ENCODE measurements at regions of chr19 and their contacts with region 1.

Region 1: DNA sequence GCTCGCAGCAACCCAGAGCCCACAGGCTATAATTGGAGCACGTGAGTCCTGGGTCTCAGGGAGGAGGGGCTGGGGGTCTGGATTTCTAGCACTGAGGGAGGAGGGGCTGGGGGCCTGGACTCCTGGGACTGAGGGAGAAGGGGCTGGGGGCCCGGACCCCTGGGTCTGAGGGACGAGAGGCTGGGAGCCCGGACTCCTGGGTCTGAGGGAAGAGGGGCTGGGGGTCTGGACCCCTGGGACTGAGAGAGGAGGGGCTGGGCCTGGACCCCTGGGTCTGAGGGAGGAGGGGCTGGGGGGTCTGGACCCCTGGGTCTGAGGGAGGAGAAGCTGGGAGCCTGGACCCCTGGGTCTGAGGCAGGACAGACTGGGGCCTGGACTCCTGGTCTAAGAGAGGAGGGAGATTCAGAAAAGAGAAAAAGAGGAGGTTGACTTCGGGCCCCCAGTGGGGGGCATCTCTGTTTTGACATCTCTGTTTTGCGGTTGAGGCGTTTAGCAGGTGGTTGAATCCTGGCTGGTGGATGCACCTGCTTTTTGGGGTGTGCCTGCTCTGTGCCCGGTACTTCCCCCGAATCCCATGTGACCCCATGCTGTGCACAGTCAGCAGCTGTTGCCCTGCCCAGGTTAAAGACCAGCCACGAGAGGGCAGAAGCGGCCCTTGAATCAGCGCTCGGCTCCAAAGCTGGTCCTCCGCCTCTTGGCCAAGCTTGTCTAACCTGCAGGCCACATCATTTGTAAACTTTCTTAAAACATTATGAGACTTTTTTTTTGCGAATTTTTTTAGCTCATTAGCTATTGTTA is 10.5 kb downstream of the PVR start:
- DNase-seq: peak; percentile 48
- H3K4me3 ChIP-seq: no peak overlapping the region
- H3K27ac ChIP-seq: no peak overlapping the region
- H3K4me1 ChIP-seq: no peaks in the 10 kb centered on the region
- H3K27me3 ChIP-seq: no peaks in the 10 kb centered on the region
- CTCF ChIP-seq: peak; percentile 62 to 76
- POLR2A ChIP-seq: no peak

Region 2: DNA sequence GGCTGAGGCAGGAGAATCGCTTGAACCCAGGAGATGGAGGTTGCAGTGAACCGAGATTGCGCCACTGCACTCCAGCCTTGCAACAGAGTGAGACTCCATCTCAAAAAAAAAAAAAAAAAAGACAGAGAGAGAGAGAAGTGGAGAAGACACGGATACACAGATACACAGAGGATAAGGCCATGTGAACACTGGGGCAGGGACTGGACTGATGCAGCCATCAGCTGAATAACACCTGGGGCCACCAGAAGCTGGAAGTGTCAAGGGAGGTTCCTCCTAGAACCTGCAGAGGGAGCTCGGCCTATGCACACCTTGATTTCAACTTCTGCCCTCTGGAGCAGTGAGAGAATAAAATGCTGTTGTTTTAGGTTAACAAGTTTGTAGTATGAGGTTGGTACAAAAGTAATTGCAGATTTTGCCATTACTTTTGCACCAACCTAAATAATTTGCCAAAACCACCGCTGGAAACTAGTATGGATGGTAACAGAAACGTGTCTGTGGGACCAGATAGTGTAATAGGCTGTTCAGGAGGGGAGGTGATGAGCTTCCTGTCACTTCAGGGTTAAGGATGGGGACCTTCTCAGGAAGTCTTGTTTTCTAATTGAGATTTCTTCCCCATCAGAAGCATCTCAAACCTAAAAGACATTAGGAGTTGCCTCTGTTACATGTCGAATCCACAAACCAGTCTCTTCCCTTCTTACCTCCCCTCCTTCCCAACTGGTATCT is 77.2 kb before region 1 on chr19:
- CTCF ChIA-PET with region 1: interaction called, 272 read pairs
- POLR2A ChIA-PET with region 1: no interaction called
- dilution Hi-C with region 1: no loop called
- intact Hi-C with region 1: loop called (anchors 1 kb)
- DNase-seq: peak; percentile 43
- H3K4me3 ChIP-seq: no peak overlapping the region
- H3K27ac ChIP-seq: no peak overlapping the region
- H3K4me1 ChIP-seq: no peaks in the 10 kb centered on the region
- H3K27me3 ChIP-seq: no peaks in the 10 kb centered on the region
- CTCF ChIP-seq: peak; percentile 38 to 68
- POLR2A ChIP-seq: no peak

Region 3: GRCh38 chr19:44582581-44583265 is 71.5 kb before region 1 on chr19:
- CTCF ChIA-PET with region 1: interaction called, 97 read pairs
- POLR2A ChIA-PET with region 1: interaction called, 7 read pairs
- dilution Hi-C with region 1: no loop called
- intact Hi-C with region 1: loop called (anchors 1 kb)
- DNase-seq: no peak
- H3K4me3 ChIP-seq: no peak overlapping the region
- H3K27ac ChIP-seq: no peak overlapping the region
- H3K4me1 ChIP-seq: peaks cover 24% of the 10 kb centered on the region
- H3K27me3 ChIP-seq: no peaks in the 10 kb centered on the region
- CTCF ChIP-seq: peak; percentile 74 to 83
- POLR2A ChIP-seq: no peak

Region 4: DNA sequence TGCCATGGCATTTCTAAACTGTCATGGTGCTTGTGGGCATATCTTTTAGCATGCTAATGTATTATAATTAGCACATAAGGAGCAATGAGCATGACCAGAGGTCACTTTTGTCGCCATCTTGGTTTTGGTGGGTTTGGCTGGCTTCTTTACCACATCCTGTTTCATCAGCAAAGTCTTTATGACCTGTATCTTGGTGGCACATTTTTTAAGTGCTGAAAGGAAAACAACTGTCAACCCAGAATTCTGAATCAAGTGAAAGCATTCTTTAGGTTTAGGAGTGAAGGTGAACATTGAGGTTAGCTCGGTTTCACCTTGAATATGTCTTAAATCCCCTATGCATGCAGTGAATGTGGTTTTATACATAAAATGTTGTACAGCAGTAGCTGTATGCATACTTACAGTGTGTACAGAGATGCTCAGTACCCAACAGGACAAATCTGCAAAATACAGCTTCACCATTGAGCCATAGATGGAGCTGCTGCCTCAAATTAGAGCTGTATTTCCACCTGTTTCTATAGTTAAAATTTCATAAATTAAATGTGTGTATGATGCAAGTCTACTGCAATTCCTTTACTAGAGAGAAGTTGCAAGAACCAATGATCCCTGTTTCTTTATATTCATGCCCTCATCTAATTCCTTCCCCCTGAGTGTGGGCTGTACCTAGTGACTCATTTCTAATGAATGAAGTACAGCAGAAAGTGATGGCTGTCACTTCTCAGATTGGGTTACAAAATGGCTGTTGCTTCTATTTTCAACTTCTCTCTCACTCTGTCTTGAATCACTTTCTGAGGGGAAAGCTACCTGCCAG is 66.0 kb before region 1 on chr19:
- CTCF ChIA-PET with region 1: interaction called, 97 read pairs
- POLR2A ChIA-PET with region 1: interaction called, 7 read pairs
- dilution Hi-C with region 1: no loop called
- intact Hi-C with region 1: loop called (anchors 1 kb)
- DNase-seq: peak; percentile 77
- H3K4me3 ChIP-seq: peak overlapping the region in 1 of 3 experiments; percentile 1
- H3K27ac ChIP-seq: peak overlapping the region; percentile 93
- H3K4me1 ChIP-seq: peaks cover 55% of the 10 kb centered on the region
- H3K27me3 ChIP-seq: no peaks in the 10 kb centered on the region
- CTCF ChIP-seq: peak in 1 of 2 donors; percentile 12
- POLR2A ChIP-seq: no peak

Region 5: GRCh38 chr19:44607049-44607448 is 47.1 kb before region 1 on chr19:
- CTCF ChIA-PET with region 1: interaction called, 8 read pairs
- POLR2A ChIA-PET with region 1: no interaction called
- dilution Hi-C with region 1: no loop called
- intact Hi-C with region 1: loop called (anchors 1 kb)
- DNase-seq: peak; percentile 95
- H3K4me3 ChIP-seq: no peak overlapping the region
- H3K27ac ChIP-seq: peak overlapping the region; percentile 93
- H3K4me1 ChIP-seq: peaks cover 62% of the 10 kb centered on the region
- H3K27me3 ChIP-seq: no peaks in the 10 kb centered on the region
- CTCF ChIP-seq: no peak
- POLR2A ChIP-seq: peak; percentile 63

Measured in endothelial cell of umbilical vein (primary cell).